ENCODE measurements at regions of chr3 and their contacts with region 1.

Region 1: DNA sequence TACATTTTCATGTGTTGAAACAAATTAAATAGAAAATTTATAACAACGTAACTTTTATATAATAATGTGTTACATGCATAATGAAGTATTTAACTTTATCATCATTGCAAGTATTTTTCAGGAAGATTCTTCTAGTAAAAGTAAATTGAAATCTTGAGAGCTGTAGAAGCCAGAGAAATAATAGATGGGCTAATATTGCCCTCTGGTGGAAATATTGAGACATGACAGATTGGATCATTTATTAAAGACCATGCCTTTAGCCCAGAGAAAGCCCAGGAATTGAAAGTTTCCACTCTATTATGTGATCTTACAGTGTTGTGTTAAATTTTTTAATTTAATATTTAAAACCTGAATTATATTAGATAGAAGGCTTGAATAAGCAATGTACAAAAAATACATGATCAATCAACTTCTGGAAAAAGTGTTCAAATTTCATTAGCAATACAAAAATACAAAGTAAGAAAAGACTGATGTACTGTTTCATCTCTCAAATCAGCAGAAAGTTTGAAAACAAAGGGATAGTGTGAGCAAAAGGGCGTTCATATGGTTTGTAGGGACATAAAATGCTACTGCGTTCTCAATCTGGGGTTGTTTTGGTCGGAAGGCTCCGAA is 52.7 kb upstream of the SPTSSB start:
- DNase-seq: no peak

Region 2: GRCh38 chr3:160707187-160707794 is 716.7 kb before region 1 on chr3:
- intact Hi-C with region 1: loop called (anchors 5 kb)
- DNase-seq: peak in 4 of 10 donors; percentile 22 to 55 (median 38)

Region 3: GRCh38 chr3:160941885-160942494 is 482.0 kb before region 1 on chr3:
- intact Hi-C with region 1: loop called (anchors 10 kb)
- DNase-seq: peak in 5 of 10 donors; percentile 27 to 78 (median 70)

Region 4: GRCh38 chr3:161273589-161274218 is 150.3 kb before region 1 on chr3:
- intact Hi-C with region 1: loop called (anchors 1 kb)
- DNase-seq: no peak

Measured in posterior cingulate gyrus (tissue), 11 donors.